ENCODE measurements at regions of chr6 and their contacts with region 1.

Region 1: GRCh38 chr6:51855310-51856082 is 231.9 kb downstream of the PKHD1 start:
- DNase-seq: peak; percentile 38 to 62
- H3K4me3 ChIP-seq: no peak overlapping the region
- H3K4me3 Mint-ChIP-seq: no peak overlapping the region
- H3K27ac Mint-ChIP-seq: no peak overlapping the region
- H3K4me1 ChIP-seq: peaks cover 19% of the 10 kb centered on the region
- H3K4me1 Mint-ChIP-seq: peaks cover 7% of the 10 kb centered on the region
- H3K27me3 ChIP-seq: no peaks in the 10 kb centered on the region
- H3K27me3 Mint-ChIP-seq: no peaks in the 10 kb centered on the region
- CTCF ChIP-seq: peak; percentile 59 to 85

Region 2: DNA sequence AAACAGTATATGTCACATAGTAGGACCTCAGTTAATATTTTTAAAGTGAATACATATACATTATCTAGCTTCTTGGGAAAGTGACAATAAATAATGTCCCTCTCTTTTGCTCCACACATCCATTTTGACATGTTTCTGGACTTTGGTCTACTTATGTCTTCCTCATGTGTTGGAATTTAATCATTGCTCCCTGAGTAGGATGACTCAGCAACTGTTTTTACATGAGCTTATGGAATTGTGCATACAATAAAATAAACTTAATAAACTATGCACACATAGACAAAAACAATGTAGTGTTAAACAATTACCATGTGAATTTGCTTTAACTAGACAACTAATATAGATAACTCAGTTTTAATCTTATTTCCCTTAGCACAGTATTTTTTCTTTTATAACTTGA is 533.0 kb before region 1 on chr6:
- CTCF ChIA-PET with region 1: no interaction called
- POLR2A ChIA-PET with region 1: no interaction called
- intact Hi-C with region 1: no loop called
- DNase-seq: no peak
- H3K4me3 ChIP-seq: no peak overlapping the region
- H3K4me3 Mint-ChIP-seq: no peak overlapping the region
- H3K27ac Mint-ChIP-seq: no peak overlapping the region
- H3K4me1 ChIP-seq: no peaks in the 10 kb centered on the region
- H3K4me1 Mint-ChIP-seq: no peaks in the 10 kb centered on the region
- H3K27me3 ChIP-seq: no peaks in the 10 kb centered on the region
- H3K27me3 Mint-ChIP-seq: no peaks in the 10 kb centered on the region
- CTCF ChIP-seq: no peak

Region 3: GRCh38 chr6:51559059-51559458 is 296.4 kb before region 1 on chr6:
- CTCF ChIA-PET with region 1: no interaction called
- POLR2A ChIA-PET with region 1: no interaction called
- intact Hi-C with region 1: loop called (anchors 5 kb)
- DNase-seq: peak; percentile 29 to 37
- H3K4me3 ChIP-seq: no peak overlapping the region
- H3K4me3 Mint-ChIP-seq: no peak overlapping the region
- H3K27ac Mint-ChIP-seq: no peak overlapping the region
- H3K4me1 ChIP-seq: no peaks in the 10 kb centered on the region
- H3K4me1 Mint-ChIP-seq: no peaks in the 10 kb centered on the region
- H3K27me3 ChIP-seq: no peaks in the 10 kb centered on the region
- H3K27me3 Mint-ChIP-seq: peaks cover 12% of the 10 kb centered on the region
- CTCF ChIP-seq: peak; percentile 27 to 54

Region 4: DNA sequence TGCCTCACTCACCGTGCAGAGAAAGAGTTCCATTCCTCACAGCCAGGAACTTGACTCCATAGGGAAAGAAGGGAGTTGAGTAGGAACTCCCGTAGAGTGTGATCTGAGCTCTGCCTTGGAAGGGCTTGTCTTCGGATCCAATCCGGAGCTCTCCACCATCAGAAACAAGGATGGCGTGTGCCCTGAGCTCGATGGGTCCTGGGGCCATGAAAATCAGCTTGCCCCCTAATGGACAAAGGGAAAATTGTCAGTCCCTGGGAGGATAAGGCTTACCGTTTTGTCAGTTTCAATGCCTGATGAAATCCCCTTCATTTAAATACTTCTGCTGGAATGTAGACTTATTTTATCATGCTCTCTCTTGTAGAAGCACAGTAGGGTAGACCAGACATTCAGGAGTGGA is 78.6 kb after region 1 on chr6:
- CTCF ChIA-PET with region 1: no interaction called
- POLR2A ChIA-PET with region 1: no interaction called
- intact Hi-C with region 1: loop called (anchors 1 kb)
- DNase-seq: peak in 1 of 2 experiments; percentile 8
- H3K4me3 ChIP-seq: no peak overlapping the region
- H3K4me3 Mint-ChIP-seq: no peak overlapping the region
- H3K27ac Mint-ChIP-seq: no peak overlapping the region
- H3K4me1 ChIP-seq: 0 out of 2 replicates have a peak, but pooled peaks cover 7% of the 10 kb centered on the region
- H3K4me1 Mint-ChIP-seq: no peaks in the 10 kb centered on the region
- H3K27me3 ChIP-seq: no peaks in the 10 kb centered on the region
- H3K27me3 Mint-ChIP-seq: no peaks in the 10 kb centered on the region
- CTCF ChIP-seq: no peak

Region 5: DNA sequence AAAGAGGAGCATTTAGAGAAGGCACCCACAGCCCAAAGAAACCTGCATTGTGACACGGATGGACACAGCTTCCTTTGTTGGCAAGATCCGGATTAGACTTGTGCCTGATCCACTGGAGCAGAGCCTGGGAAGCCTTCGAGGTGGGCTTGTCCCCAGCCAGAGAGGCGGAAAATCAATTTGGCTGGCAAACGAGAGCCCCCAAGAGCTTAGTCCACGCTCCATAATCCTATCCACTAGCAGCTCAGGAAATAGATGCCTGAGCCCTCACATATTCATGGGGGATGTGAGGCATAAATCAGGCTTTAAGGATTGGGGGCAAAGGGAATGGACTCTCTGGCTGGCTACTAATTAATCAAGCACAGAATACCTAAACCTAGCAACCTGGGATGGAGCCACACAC is 94.0 kb after region 1 on chr6:
- CTCF ChIA-PET with region 1: no interaction called
- POLR2A ChIA-PET with region 1: no interaction called
- intact Hi-C with region 1: no loop called
- DNase-seq: no peak
- H3K4me3 ChIP-seq: no peak overlapping the region
- H3K4me3 Mint-ChIP-seq: no peak overlapping the region
- H3K27ac Mint-ChIP-seq: no peak overlapping the region
- H3K4me1 ChIP-seq: no peaks in the 10 kb centered on the region
- H3K4me1 Mint-ChIP-seq: no peaks in the 10 kb centered on the region
- H3K27me3 ChIP-seq: no peaks in the 10 kb centered on the region
- H3K27me3 Mint-ChIP-seq: no peaks in the 10 kb centered on the region
- CTCF ChIP-seq: no peak

Region 6: GRCh38 chr6:51959744-51960383 is 104.4 kb after region 1 on chr6:
- CTCF ChIA-PET with region 1: interaction called, 8 read pairs
- POLR2A ChIA-PET with region 1: no interaction called
- intact Hi-C with region 1: loop called (anchors 1 kb)
- DNase-seq: peak; percentile 68 to 81
- H3K4me3 ChIP-seq: no peak overlapping the region
- H3K4me3 Mint-ChIP-seq: no peak overlapping the region
- H3K27ac Mint-ChIP-seq: no peak overlapping the region
- H3K4me1 ChIP-seq: no peaks in the 10 kb centered on the region
- H3K4me1 Mint-ChIP-seq: no peaks in the 10 kb centered on the region
- H3K27me3 ChIP-seq: no peaks in the 10 kb centered on the region
- H3K27me3 Mint-ChIP-seq: no peaks in the 10 kb centered on the region
- CTCF ChIP-seq: peak; percentile 77 to 86

Region 7: GRCh38 chr6:52020945-52021570 is 165.6 kb after region 1 on chr6:
- CTCF ChIA-PET with region 1: no interaction called
- POLR2A ChIA-PET with region 1: no interaction called
- intact Hi-C with region 1: loop called (anchors 1 kb)
- DNase-seq: peak in 1 of 2 experiments; percentile 21
- H3K4me3 ChIP-seq: no peak overlapping the region
- H3K4me3 Mint-ChIP-seq: no peak overlapping the region
- H3K27ac Mint-ChIP-seq: no peak overlapping the region
- H3K4me1 ChIP-seq: peaks cover 15% of the 10 kb centered on the region
- H3K4me1 Mint-ChIP-seq: peaks cover 12% of the 10 kb centered on the region
- H3K27me3 ChIP-seq: no peaks in the 10 kb centered on the region
- H3K27me3 Mint-ChIP-seq: no peaks in the 10 kb centered on the region
- CTCF ChIP-seq: peak; percentile 55 to 78

Region 8: GRCh38 chr6:52049252-52050050 is 194.0 kb after region 1 on chr6:
- CTCF ChIA-PET with region 1: no interaction called
- POLR2A ChIA-PET with region 1: no interaction called
- intact Hi-C with region 1: loop called (anchors 1 kb)
- DNase-seq: peak in 1 of 2 experiments; percentile 38
- H3K4me3 ChIP-seq: no peak overlapping the region
- H3K4me3 Mint-ChIP-seq: no peak overlapping the region
- H3K27ac Mint-ChIP-seq: no peak overlapping the region
- H3K4me1 ChIP-seq: no peaks in the 10 kb centered on the region
- H3K4me1 Mint-ChIP-seq: no peaks in the 10 kb centered on the region
- H3K27me3 ChIP-seq: no peaks in the 10 kb centered on the region
- H3K27me3 Mint-ChIP-seq: no peaks in the 10 kb centered on the region
- CTCF ChIP-seq: peak; percentile 50 to 59

Measured in Caco-2 (cell line).